Endothelial cell of umbilical vein (primary cell): ENCODE measurements at regions of chr7 and their contacts with region 1.

Region 1: GRCh38 chr7:29622335-29623265 is 59.0 kb downstream of the PRR15 start:
- DNase-seq: peak; percentile 91
- H3K4me3 ChIP-seq: no peak overlapping the region
- H3K27ac ChIP-seq: peak overlapping the region; percentile 53
- H3K4me1 ChIP-seq: peaks cover 6% of the 10 kb centered on the region
- H3K27me3 ChIP-seq: no peaks in the 10 kb centered on the region
- CTCF ChIP-seq: no peak
- POLR2A ChIP-seq: no peak

Region 2: GRCh38 chr7:27952456-27953285 is 1669.9 kb before region 1 on chr7:
- CTCF ChIA-PET with region 1: no interaction called
- POLR2A ChIA-PET with region 1: no interaction called
- dilution Hi-C with region 1: no loop called
- intact Hi-C with region 1: no loop called
- DNase-seq: no peak
- H3K4me3 ChIP-seq: no peak overlapping the region
- H3K27ac ChIP-seq: no peak overlapping the region
- H3K4me1 ChIP-seq: no peaks in the 10 kb centered on the region
- H3K27me3 ChIP-seq: no peaks in the 10 kb centered on the region
- CTCF ChIP-seq: no peak
- POLR2A ChIP-seq: no peak

Region 3: DNA sequence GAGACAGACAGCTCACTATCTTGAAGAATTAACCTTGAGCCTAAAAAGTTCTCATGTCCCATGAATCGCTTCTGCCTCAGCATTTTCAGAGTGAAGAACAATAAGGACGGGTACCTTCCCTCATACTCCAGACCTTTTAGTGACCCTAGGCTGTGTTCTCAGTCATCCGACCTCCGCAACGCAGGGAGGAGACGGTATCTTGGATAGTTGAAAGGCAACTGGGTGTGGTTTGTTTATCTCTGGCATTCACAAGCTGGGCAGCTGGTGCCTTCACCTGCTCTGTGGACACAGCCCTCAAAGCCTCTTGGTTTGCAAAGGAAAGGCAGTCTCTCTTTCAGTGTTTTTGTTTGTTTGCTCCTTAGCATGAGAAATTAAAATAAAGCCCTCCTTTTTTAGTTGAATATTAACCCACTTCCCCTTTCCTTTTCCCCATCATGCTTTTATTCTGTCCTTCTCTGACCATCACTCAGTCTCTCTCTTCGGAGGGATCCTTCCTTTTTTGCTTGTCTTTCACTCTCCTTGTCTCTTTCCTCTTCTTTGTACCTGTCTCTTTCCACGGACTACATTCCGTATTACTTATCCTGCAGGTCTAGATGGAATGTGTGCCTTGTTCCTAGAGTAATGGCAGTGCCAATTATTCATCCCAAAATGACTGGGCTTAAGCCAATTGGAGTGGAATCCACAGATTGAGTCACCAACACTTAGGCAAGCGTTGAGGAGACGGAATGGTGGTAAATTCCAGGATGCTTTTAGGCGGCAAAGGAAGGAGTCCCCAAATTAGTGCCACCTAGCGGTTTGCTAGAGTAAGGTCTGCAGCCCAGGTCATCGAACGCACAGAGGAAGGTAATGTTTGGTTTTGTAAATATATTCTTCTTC is 13.2 kb before region 1 on chr7:
- CTCF ChIA-PET with region 1: interaction called, 10 read pairs
- POLR2A ChIA-PET with region 1: no interaction called
- dilution Hi-C with region 1: no loop called
- intact Hi-C with region 1: no loop called
- DNase-seq: peak; percentile 17
- H3K4me3 ChIP-seq: no peak overlapping the region
- H3K27ac ChIP-seq: no peak overlapping the region
- H3K4me1 ChIP-seq: no peaks in the 10 kb centered on the region
- H3K27me3 ChIP-seq: no peaks in the 10 kb centered on the region
- CTCF ChIP-seq: peak; percentile 61 to 66
- POLR2A ChIP-seq: no peak

Region 4: GRCh38 chr7:29636009-29636351 is 13.4 kb after region 1 on chr7:
- CTCF ChIA-PET with region 1: interaction called, 10 read pairs
- POLR2A ChIA-PET with region 1: no interaction called
- dilution Hi-C with region 1: no loop called
- intact Hi-C with region 1: no loop called
- DNase-seq: no peak
- H3K4me3 ChIP-seq: no peak overlapping the region
- H3K27ac ChIP-seq: no peak overlapping the region
- H3K4me1 ChIP-seq: no peaks in the 10 kb centered on the region
- H3K27me3 ChIP-seq: no peaks in the 10 kb centered on the region
- CTCF ChIP-seq: no peak
- POLR2A ChIP-seq: no peak

Region 5: DNA sequence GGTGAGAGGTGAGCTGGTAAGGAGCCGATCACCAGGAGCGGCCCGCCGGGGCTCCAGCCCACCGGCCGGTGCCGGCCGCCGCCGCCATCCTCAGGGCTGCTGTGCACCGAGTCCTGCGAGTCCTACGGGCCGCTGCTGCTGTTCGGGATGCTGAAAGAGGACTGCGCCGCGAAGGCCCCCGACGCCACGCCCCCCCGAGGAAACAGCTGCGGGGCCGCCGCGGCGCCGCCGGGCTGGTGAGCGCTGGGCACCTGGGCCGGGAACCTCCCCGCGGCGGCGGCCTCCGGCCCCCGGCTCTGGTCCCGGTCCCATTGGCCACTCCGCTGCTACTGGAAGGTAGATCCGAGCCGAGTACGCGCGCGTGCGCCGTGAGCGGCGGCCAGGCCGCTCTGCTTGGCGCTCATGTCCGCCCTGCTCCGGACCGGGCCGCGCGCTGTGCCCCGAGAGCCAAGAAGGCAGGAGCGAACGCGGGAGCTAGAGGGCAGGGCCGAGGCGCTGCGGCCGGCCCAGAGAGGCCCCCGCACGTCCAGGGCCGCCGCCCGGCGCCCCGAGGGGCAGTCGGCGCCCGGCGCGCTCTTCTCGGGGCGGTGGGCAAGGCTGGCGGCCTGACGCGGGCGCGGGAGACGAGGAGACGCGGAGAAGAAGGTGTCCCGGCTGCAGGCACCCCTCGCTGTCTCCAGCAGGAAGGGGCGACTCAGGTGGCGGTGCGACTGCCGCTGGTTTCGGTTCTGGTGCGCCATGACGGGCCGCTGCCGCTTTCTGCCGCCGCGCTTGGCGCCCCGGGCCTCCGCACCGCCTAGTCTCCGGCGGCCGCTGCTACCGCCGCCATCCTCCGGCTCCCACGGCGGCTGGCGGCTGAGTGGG is 62.4 kb after region 1 on chr7:
- CTCF ChIA-PET with region 1: no interaction called
- POLR2A ChIA-PET with region 1: no interaction called
- dilution Hi-C with region 1: no loop called
- intact Hi-C with region 1: loop called (anchors 2 kb)
- DNase-seq: peak; percentile 77
- H3K4me3 ChIP-seq: peak overlapping the region; percentile 52 to 68 (median 56)
- H3K27ac ChIP-seq: peak overlapping the region; percentile 58
- H3K4me1 ChIP-seq: no peaks in the 10 kb centered on the region
- H3K27me3 ChIP-seq: no peaks in the 10 kb centered on the region
- CTCF ChIP-seq: no peak
- POLR2A ChIP-seq: no peak

Region 6: DNA sequence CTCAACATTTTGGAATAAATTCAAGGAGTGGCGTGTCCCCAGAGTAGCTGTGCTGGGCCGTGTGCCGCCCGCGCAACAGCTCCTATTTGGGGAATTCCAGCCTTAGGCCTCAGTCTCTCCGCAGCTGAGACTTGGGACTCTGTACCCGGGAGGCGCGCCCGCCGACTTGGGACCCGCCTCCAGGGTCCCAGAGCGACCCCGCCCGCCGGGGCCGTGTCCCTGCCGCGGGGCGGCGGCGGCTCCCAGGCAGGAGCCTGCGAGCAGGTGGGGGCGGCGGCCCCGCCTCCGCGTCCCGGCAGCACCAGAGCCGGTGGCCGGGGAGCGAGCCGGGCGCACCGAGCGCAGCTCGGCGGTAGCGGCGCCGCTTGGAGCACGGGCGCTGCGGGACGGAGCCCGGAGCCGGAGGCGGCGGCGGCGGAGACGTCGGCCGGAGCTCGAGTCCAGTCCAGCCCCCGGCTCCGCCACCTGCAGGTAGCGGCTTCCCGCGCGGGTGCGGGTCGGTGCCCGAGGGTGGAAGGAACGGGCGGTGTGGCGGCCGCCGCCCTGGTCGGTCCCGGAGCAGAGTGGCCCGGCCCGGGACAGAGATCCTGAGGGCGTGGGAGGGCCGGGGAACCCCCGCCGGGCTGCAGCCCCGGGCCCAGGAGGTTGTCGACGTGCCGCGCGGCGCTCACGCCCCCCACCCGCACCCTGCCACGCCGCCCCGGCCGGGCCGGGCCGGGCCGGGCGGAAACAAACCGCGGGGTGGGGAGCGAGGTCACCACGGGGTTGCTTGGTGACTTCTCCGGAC is 183.8 kb after region 1 on chr7 and contains the start of gene WIPF3:
- CTCF ChIA-PET with region 1: no interaction called
- POLR2A ChIA-PET with region 1: no interaction called
- dilution Hi-C with region 1: no loop called
- intact Hi-C with region 1: no loop called
- DNase-seq: peak; percentile 1
- H3K4me3 ChIP-seq: peak within 1 kb of the TSS in 1 of 3 experiments; percentile 30
- H3K27ac ChIP-seq: no peak within 1 kb of the TSS
- H3K4me1 ChIP-seq: peaks cover 3% of the 10 kb centered on the region
- H3K27me3 ChIP-seq: peaks cover 44 to 62% of the 10 kb centered on the region in 2 experiments
- CTCF ChIP-seq: no peak
- POLR2A ChIP-seq: no peak
- total RNA-seq, gene WIPF3: 0.35 TPM in 1 of 2 replicates, not detected in the other